ENCODE measurements at regions of chr17 and their contacts with region 1.

Region 1: GRCh38 chr17:57009737-57010445 is 32.0 kb downstream of the SCPEP1 start:
- DNase-seq: peak; percentile 77
- ATAC-seq: peak; percentile 96
- H3K4me3 Mint-ChIP-seq: peak overlapping the region; percentile 2
- H3K27ac Mint-ChIP-seq: no peak overlapping the region
- H3K4me1 Mint-ChIP-seq: peaks cover 5% of the 10 kb centered on the region
- H3K27me3 Mint-ChIP-seq: no peaks in the 10 kb centered on the region

Region 2: GRCh38 chr17:56819431-56820145 is 190.3 kb before region 1 on chr17:
- CTCF ChIA-PET with region 1: interaction called, 3 read pairs
- POLR2A ChIA-PET with region 1: no interaction called
- intact Hi-C with region 1: loop called in 1 of 2 experiments (anchors 1 kb)
- DNase-seq: peak; percentile 84
- ATAC-seq: peak; percentile 83
- H3K4me3 Mint-ChIP-seq: no peak overlapping the region
- H3K27ac Mint-ChIP-seq: peak overlapping the region; percentile 7
- H3K4me1 Mint-ChIP-seq: peaks cover 22% of the 10 kb centered on the region
- H3K27me3 Mint-ChIP-seq: no peaks in the 10 kb centered on the region

Region 3: GRCh38 chr17:57032343-57032742 is 22.5 kb after region 1 on chr17:
- CTCF ChIA-PET with region 1: interaction called, 7 read pairs
- POLR2A ChIA-PET with region 1: interaction called, 15 read pairs
- intact Hi-C with region 1: no loop called
- DNase-seq: no peak
- ATAC-seq: no peak
- H3K4me3 Mint-ChIP-seq: no peak overlapping the region
- H3K27ac Mint-ChIP-seq: no peak overlapping the region
- H3K4me1 Mint-ChIP-seq: no peaks in the 10 kb centered on the region
- H3K27me3 Mint-ChIP-seq: peaks cover 23% of the 10 kb centered on the region

Region 4: GRCh38 chr17:57158296-57158695 is 148.4 kb after region 1 on chr17:
- CTCF ChIA-PET with region 1: no interaction called
- POLR2A ChIA-PET with region 1: no interaction called
- intact Hi-C with region 1: no loop called
- DNase-seq: no peak
- ATAC-seq: no peak
- H3K4me3 Mint-ChIP-seq: no peak overlapping the region
- H3K27ac Mint-ChIP-seq: no peak overlapping the region
- H3K4me1 Mint-ChIP-seq: no peaks in the 10 kb centered on the region
- H3K27me3 Mint-ChIP-seq: peaks cover 6% of the 10 kb centered on the region

Measured in activated CD4-positive, alpha-beta T cell treated with anti-CD3 and anti-CD28 coated beads for 36 hours (primary cell).